ENCODE measurements at regions of chr3 and their contacts with region 1.

Region 1: GRCh38 chr3:170144437-170144843 is 37.1 kb downstream of the PHC3 start:
- DNase-seq: no peak
- H3K4me3 Mint-ChIP-seq: no peak overlapping the region
- H3K27ac Mint-ChIP-seq: peak overlapping the region; percentile 43
- H3K4me1 Mint-ChIP-seq: peaks cover 25% of the 10 kb centered on the region
- H3K27me3 Mint-ChIP-seq: no peaks in the 10 kb centered on the region

Region 2: DNA sequence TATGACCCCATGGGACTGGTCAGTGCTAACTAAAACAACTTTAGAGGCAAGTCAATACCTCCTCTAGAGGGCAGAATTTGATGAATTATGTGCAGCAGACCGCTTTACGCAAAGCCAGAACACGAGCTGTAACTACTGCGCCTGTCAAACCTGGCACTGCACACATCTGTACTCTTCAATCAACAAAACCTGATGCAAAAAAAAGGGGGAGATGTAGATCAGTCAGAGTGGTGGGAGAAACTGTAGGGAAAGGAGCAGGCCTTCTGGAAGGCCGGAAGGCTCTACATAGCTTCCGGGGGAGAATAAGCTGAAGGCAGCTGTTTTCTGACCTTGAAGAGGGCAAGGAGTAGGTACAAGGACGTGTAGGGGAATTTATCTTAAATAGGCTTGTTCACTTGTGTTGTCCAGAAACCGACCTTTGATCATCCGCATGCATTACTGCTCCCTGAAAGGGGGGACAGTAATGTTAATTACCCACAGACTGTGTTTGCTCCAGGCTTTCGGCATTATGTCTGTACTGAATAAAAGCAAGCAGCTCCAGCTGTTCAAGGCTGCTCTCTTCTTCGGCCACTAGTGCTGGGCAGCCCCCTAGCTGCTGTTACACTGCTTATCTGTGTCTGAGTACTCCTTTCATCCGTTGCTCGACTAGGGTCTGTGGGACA is 65.7 kb before region 1 on chr3:
- CTCF ChIA-PET with region 1: no interaction called
- POLR2A ChIA-PET with region 1: no interaction called
- intact Hi-C with region 1: no loop called
- DNase-seq: no peak
- H3K4me3 Mint-ChIP-seq: no peak overlapping the region
- H3K27ac Mint-ChIP-seq: no peak overlapping the region
- H3K4me1 Mint-ChIP-seq: no peaks in the 10 kb centered on the region
- H3K27me3 Mint-ChIP-seq: no peaks in the 10 kb centered on the region

Region 3: GRCh38 chr3:170162630-170163029 is 18.2 kb after region 1 on chr3:
- CTCF ChIA-PET with region 1: no interaction called
- POLR2A ChIA-PET with region 1: no interaction called
- intact Hi-C with region 1: loop called (anchors 2 kb)
- DNase-seq: no peak
- H3K4me3 Mint-ChIP-seq: no peak overlapping the region
- H3K27ac Mint-ChIP-seq: peak overlapping the region; percentile 60
- H3K4me1 Mint-ChIP-seq: peaks cover 63% of the 10 kb centered on the region
- H3K27me3 Mint-ChIP-seq: no peaks in the 10 kb centered on the region

Measured in activated CD4-positive, alpha-beta memory T cell treated with anti-CD3 and anti-CD28 coated beads for 36 hours (primary cell).